Activated CD4-positive, alpha-beta T cell treated with anti-CD3 and anti-CD28 coated beads, Interleukin-2, amount 10 ng/mL, durations not matched to agents 7 days and 5 days (primary cell): ENCODE measurements at regions of chr2 and their contacts with region 1.

Region 1: DNA sequence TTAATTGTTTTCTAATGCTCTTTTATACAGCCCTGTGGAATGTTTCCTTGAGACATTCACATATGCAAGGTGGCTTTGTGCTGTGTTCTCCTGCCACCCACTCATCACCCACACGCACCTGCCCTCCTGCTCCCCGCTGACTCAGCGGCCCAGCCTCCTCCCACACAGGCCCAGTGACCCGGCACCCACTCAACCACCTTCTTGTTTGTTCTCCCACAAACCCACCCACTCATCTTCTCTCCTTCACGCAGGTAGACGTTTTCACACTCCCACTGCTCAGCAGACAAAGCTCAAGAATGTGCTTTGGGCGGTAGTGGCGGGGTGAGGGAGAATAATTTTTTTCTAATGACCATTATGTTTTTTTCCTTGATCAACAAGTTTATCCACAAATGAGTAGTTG is 28.6 kb upstream of the NEMP2 start:
- DNase-seq: no peak
- H3K4me3 Mint-ChIP-seq: no peak overlapping the region
- H3K27ac Mint-ChIP-seq: no peak overlapping the region
- H3K4me1 Mint-ChIP-seq: peaks cover 4% of the 10 kb centered on the region
- H3K27me3 Mint-ChIP-seq: peaks cover 1% of the 10 kb centered on the region

Region 2: DNA sequence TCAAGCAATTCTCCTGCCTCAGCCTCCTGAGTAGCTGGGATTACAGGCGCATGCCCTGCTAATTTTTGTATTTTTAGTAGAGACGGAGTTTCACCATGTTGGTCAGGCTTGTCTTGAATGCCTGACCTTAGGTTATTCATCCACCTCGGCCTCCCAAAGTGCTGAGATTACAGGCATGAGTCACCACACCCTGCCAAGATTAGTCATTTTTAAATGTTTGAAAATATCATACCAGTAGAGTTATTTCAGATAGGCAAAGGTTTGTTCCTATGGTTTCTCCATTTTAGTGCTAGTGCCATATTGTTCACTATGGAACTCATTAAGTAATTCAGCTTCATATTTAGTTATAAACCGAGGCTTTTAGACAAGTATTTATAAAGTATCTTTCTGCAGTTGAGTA is 295.8 kb before region 1 on chr2:
- CTCF ChIA-PET with region 1: no interaction called
- POLR2A ChIA-PET with region 1: no interaction called
- DNase-seq: no peak
- H3K4me3 Mint-ChIP-seq: no peak overlapping the region
- H3K27ac Mint-ChIP-seq: no peak overlapping the region
- H3K4me1 Mint-ChIP-seq: no peaks in the 10 kb centered on the region
- H3K27me3 Mint-ChIP-seq: no peaks in the 10 kb centered on the region

Region 3: GRCh38 chr2:190443778-190444481 is 119.2 kb before region 1 on chr2:
- CTCF ChIA-PET with region 1: no interaction called
- POLR2A ChIA-PET with region 1: no interaction called
- DNase-seq: no peak
- H3K4me3 Mint-ChIP-seq: no peak overlapping the region
- H3K27ac Mint-ChIP-seq: no peak overlapping the region
- H3K4me1 Mint-ChIP-seq: peaks cover 8% of the 10 kb centered on the region
- H3K27me3 Mint-ChIP-seq: no peaks in the 10 kb centered on the region

Region 4: GRCh38 chr2:190551928-190552327 is 11.2 kb before region 1 on chr2:
- CTCF ChIA-PET with region 1: interaction called, 17 read pairs
- POLR2A ChIA-PET with region 1: no interaction called
- DNase-seq: peak; percentile 19
- H3K4me3 Mint-ChIP-seq: no peak overlapping the region
- H3K27ac Mint-ChIP-seq: no peak overlapping the region
- H3K4me1 Mint-ChIP-seq: peaks cover 8% of the 10 kb centered on the region
- H3K27me3 Mint-ChIP-seq: no peaks in the 10 kb centered on the region

Region 5: DNA sequence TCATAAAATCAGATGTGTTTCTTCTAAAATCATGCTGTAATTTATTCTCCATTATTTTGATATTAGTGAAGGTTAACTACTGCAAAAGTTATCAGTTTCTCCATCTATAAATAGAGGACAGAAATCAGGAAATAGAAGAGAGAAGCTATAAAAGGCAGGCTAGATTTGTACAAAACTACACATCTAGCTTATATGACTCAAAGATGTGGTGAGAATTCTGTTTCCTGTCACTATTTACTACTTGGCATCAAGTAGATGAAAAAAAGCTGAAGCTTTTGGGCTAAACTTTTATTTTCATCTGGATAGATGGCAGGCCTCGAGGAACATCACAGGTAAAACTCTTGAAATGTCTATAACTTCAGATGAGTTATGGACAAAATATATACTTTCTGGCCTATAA is 36.0 kb after region 1 on chr2:
- CTCF ChIA-PET with region 1: no interaction called
- POLR2A ChIA-PET with region 1: no interaction called
- DNase-seq: no peak
- H3K4me3 Mint-ChIP-seq: no peak overlapping the region
- H3K27ac Mint-ChIP-seq: no peak overlapping the region
- H3K4me1 Mint-ChIP-seq: peaks cover 14% of the 10 kb centered on the region
- H3K27me3 Mint-ChIP-seq: no peaks in the 10 kb centered on the region